B cell (primary cell): ENCODE measurements at regions of chr4 and their contacts with region 1.

Region 1: DNA sequence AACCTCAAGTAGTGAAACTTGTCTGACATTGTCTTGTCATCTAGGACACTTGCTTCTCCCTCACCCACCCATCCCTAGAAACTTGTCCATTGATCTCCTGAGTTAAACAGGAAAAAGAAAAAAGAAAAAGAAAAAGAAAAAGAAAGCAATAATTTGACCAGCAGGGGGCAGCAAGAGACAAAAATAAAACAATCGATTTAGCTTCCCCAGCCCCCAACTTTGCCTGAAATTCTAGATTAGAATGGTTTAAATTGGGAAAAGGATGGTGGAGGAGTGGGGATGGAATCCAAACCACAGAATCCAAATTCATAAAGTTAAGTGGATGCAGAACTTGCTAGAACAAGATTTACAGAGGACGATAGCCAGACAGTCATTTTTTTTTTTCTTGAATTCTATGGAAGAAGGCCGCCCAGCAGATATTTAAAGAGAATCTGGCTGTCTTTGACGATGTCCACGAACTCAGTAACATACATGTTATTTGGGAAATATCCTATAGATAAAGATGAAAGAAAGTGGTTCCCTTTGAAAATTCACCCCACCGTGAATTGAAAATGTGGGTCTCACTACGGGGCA is 282.9 kb downstream of the USP46 start:
- DNase-seq: peak; percentile 49
- ATAC-seq: no peak
- H3K4me3 ChIP-seq: no peak overlapping the region
- H3K4me3 Mint-ChIP-seq: no peak overlapping the region
- H3K27ac ChIP-seq: no peak overlapping the region
- H3K27ac Mint-ChIP-seq: no peak overlapping the region
- H3K4me1 ChIP-seq: no peaks in the 10 kb centered on the region
- H3K4me1 Mint-ChIP-seq: no peaks in the 10 kb centered on the region
- H3K27me3 ChIP-seq: peaks cover 0 to 3% (median 0%) of the 10 kb centered on the region in 4 experiments
- H3K27me3 Mint-ChIP-seq: peaks cover 26% of the 10 kb centered on the region
- CTCF ChIP-seq: peak; percentile 80

Region 2: DNA sequence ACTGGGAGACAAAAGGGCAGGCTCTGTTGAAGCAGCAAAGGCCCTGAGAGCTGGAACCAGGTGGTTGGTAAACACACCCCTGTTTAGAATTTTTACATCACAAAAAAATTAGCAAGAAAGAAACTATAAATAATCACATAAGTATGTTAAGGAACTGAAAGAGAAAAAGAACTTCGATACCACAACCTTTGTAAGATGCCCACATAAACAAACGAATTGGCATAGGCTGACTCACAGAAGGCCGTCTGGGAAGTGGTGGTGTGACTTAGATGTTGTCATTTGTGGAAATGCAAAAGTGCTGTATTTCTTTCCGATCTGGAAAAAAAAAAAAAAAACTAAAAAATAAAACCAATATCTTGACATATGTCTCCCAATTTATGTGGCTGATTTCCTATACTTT is 47.7 kb after region 1 on chr4:
- CTCF ChIA-PET with region 1: no interaction called
- POLR2A ChIA-PET with region 1: no interaction called
- intact Hi-C with region 1: no loop called
- DNase-seq: no peak
- ATAC-seq: no peak
- H3K4me3 ChIP-seq: no peak overlapping the region
- H3K4me3 Mint-ChIP-seq: no peak overlapping the region
- H3K27ac ChIP-seq: no peak overlapping the region
- H3K27ac Mint-ChIP-seq: no peak overlapping the region
- H3K4me1 ChIP-seq: no peaks in the 10 kb centered on the region
- H3K4me1 Mint-ChIP-seq: no peaks in the 10 kb centered on the region
- H3K27me3 ChIP-seq: no peaks in the 10 kb centered on the region
- H3K27me3 Mint-ChIP-seq: no peaks in the 10 kb centered on the region
- CTCF ChIP-seq: no peak

Region 3: GRCh38 chr4:52665592-52665991 is 289.4 kb after region 1 on chr4:
- CTCF ChIA-PET with region 1: interaction called, 10 read pairs
- POLR2A ChIA-PET with region 1: no interaction called
- intact Hi-C with region 1: no loop called
- DNase-seq: peak; percentile 44
- ATAC-seq: peak; percentile 54
- H3K4me3 ChIP-seq: no peak overlapping the region
- H3K4me3 Mint-ChIP-seq: no peak overlapping the region
- H3K27ac ChIP-seq: no peak overlapping the region
- H3K27ac Mint-ChIP-seq: no peak overlapping the region
- H3K4me1 ChIP-seq: no peaks in the 10 kb centered on the region
- H3K4me1 Mint-ChIP-seq: peaks cover 2% of the 10 kb centered on the region
- H3K27me3 ChIP-seq: peaks cover 0 to 15% (median 3%) of the 10 kb centered on the region in 4 experiments
- H3K27me3 Mint-ChIP-seq: peaks cover 15% of the 10 kb centered on the region
- CTCF ChIP-seq: no peak